PC-3 (cell line): ENCODE measurements at regions of chr10 and their contacts with region 1.

Region 1: DNA sequence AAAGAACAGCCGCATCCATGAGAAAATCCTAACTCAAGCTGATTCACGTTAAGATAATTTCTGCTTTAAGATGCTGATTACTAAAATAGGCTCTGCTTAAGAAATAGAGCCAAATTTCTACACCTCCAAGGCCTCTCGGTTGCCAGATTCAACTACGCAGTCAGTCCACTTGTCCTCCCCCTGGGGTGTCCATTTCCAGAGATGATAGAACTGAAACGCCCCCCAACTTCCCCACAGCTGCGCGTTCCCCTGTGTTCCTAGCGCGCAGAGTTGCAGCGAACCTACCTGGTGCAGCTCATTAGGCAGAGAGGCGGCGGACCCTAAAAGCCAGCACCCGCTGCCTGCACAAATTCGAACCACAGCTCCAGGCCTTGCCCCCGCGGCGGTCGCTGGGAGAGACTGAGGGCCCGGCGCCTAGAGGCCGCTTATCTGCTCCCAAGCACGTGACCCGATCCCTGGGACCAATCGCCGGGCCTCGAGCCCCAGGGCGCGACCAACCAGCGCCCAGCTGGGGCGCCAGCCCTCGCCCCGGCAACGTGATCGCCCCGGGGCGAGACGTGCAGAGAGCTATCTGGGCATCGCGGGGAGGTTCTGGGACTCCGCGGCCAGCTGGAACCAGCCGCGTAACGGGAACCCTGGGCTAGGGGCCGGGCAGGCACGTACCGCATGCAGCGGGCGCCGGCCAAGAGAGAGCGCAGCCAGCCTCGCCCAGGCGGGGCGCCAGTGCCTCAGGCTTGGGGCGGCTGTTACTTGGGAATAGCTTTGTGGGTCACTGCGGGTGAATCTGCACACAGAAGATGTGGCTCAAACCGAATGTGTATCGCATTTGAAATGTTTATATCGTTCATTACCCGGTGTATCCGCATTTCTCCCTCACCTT is at the start of gene PPP1R3C:
- DNase-seq: no peak
- ATAC-seq: peak; percentile 50
- H3K4me3 ChIP-seq: peak within 1 kb of the TSS; percentile 34; the same call in 1 of the 2 replicates
- H3K27ac ChIP-seq: no peak within 1 kb of the TSS
- H3K4me1 ChIP-seq: no peaks in the 10 kb centered on the region
- H3K27me3 ChIP-seq: no peaks in the 10 kb centered on the region
- CTCF ChIP-seq: no peak
- total RNA-seq, gene PPP1R3C: 0.17 TPM in 1 of 2 replicates, not detected in the other

Region 2: GRCh38 chr10:91298224-91298871 is 334.6 kb before region 1 on chr10:
- CTCF ChIA-PET with region 1: no interaction called
- POLR2A ChIA-PET with region 1: no interaction called
- intact Hi-C with region 1: loop called (anchors 5 kb)
- DNase-seq: peak; percentile 74
- ATAC-seq: peak; percentile 80
- H3K4me3 ChIP-seq: peak overlapping the region; percentile 44
- H3K27ac ChIP-seq: no peak overlapping the region
- H3K4me1 ChIP-seq: peaks cover 16% of the 10 kb centered on the region
- H3K27me3 ChIP-seq: no peaks in the 10 kb centered on the region
- CTCF ChIP-seq: peak; percentile 79

Region 3: GRCh38 chr10:91389636-91390512 is 243.0 kb before region 1 on chr10:
- CTCF ChIA-PET with region 1: interaction called, 5 read pairs
- POLR2A ChIA-PET with region 1: no interaction called
- intact Hi-C with region 1: loop called (anchors 1 kb)
- DNase-seq: peak; percentile 71
- ATAC-seq: peak; percentile 80
- H3K4me3 ChIP-seq: peak overlapping the region; percentile 41; the same call in 1 of the 2 replicates
- H3K27ac ChIP-seq: no peak overlapping the region
- H3K4me1 ChIP-seq: no peaks in the 10 kb centered on the region
- H3K27me3 ChIP-seq: no peaks in the 10 kb centered on the region; the same call in 1 of the 2 replicates
- CTCF ChIP-seq: peak; percentile 62

Region 4: GRCh38 chr10:91409869-91410637 is 222.9 kb before region 1 on chr10 and contains the start of gene HECTD2:
- CTCF ChIA-PET with region 1: no interaction called
- POLR2A ChIA-PET with region 1: no interaction called
- intact Hi-C with region 1: loop called (anchors 10 kb)
- DNase-seq: peak; percentile 61
- ATAC-seq: peak; percentile 79
- H3K4me3 ChIP-seq: peak within 1 kb of the TSS; percentile 81
- H3K27ac ChIP-seq: peak within 1 kb of the TSS; percentile 88
- H3K4me1 ChIP-seq: peaks cover 17% of the 10 kb centered on the region
- H3K27me3 ChIP-seq: no peaks in the 10 kb centered on the region
- CTCF ChIP-seq: peak; percentile 22; the same call in 1 of the 2 replicates
- total RNA-seq, gene HECTD2: 2.9 and 4.0 TPM in 2 replicates

Region 5: DNA sequence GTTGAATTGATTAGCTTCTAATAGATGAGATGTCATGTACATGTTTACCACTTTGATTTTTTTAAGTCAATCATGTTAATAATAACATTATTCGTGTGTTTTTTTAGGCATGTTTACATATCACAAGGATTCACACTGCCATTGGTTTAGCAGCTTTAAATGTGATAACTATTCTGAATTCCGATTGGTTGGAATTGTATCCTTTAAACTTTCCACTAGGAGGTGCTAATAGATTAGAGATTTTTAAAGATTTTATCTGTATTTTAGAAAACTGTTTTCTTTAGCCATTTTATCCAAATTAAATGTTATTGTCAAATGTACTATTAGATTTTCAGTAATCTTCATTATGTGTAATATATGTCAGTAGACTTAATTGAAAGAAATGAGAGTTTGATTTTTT is 139.6 kb before region 1 on chr10:
- CTCF ChIA-PET with region 1: interaction called, 6 read pairs
- POLR2A ChIA-PET with region 1: no interaction called
- intact Hi-C with region 1: loop called (anchors 1 kb)
- DNase-seq: peak; percentile 65
- ATAC-seq: 0 out of 2 replicates have a peak, but pooled peaks have one; percentile 33
- H3K4me3 ChIP-seq: no peak overlapping the region
- H3K27ac ChIP-seq: no peak overlapping the region
- H3K4me1 ChIP-seq: no peaks in the 10 kb centered on the region
- H3K27me3 ChIP-seq: no peaks in the 10 kb centered on the region
- CTCF ChIP-seq: peak; percentile 63

Region 6: GRCh38 chr10:91551856-91552255 is 81.1 kb before region 1 on chr10:
- CTCF ChIA-PET with region 1: interaction called, 6 read pairs
- POLR2A ChIA-PET with region 1: no interaction called
- intact Hi-C with region 1: loop called (anchors 1 kb)
- DNase-seq: peak; percentile 40
- ATAC-seq: peak; percentile 90
- H3K4me3 ChIP-seq: no peak overlapping the region
- H3K27ac ChIP-seq: no peak overlapping the region
- H3K4me1 ChIP-seq: 0 out of 2 replicates have a peak, but pooled peaks cover 4% of the 10 kb centered on the region
- H3K27me3 ChIP-seq: no peaks in the 10 kb centered on the region
- CTCF ChIP-seq: peak; percentile 78

Region 7: GRCh38 chr10:91590142-91590903 is 42.6 kb before region 1 on chr10:
- CTCF ChIA-PET with region 1: no interaction called
- POLR2A ChIA-PET with region 1: no interaction called
- intact Hi-C with region 1: loop called (anchors 2 kb)
- DNase-seq: peak; percentile 92
- ATAC-seq: peak; percentile 88
- H3K4me3 ChIP-seq: peak overlapping the region; percentile 36; the same call in 1 of the 2 replicates
- H3K27ac ChIP-seq: peak overlapping the region; percentile 98
- H3K4me1 ChIP-seq: peaks cover 46% of the 10 kb centered on the region
- H3K27me3 ChIP-seq: no peaks in the 10 kb centered on the region
- CTCF ChIP-seq: no peak